Aorta (tissue), 5 donors: ENCODE measurements at regions of chr3 and their contacts with region 1.

Region 1: GRCh38 chr3:193665370-193665989 is 72.5 kb downstream of the OPA1 start:
- DNase-seq: no peak
- ATAC-seq: no peak
- H3K4me3 ChIP-seq: no peak overlapping the region
- H3K27ac ChIP-seq: no peak overlapping the region
- H3K4me1 ChIP-seq: no peaks in the 10 kb centered on the region
- H3K27me3 ChIP-seq: no peaks in the 10 kb centered on the region

Region 2: GRCh38 chr3:193391902-193392301 is 273.6 kb before region 1 on chr3:
- intact Hi-C with region 1: no loop called
- DNase-seq: no peak
- ATAC-seq: no peak
- H3K4me3 ChIP-seq: no peak overlapping the region
- H3K27ac ChIP-seq: no peak overlapping the region
- H3K4me1 ChIP-seq: no peaks in the 10 kb centered on the region
- H3K27me3 ChIP-seq: no peaks in the 10 kb centered on the region

Region 3: DNA sequence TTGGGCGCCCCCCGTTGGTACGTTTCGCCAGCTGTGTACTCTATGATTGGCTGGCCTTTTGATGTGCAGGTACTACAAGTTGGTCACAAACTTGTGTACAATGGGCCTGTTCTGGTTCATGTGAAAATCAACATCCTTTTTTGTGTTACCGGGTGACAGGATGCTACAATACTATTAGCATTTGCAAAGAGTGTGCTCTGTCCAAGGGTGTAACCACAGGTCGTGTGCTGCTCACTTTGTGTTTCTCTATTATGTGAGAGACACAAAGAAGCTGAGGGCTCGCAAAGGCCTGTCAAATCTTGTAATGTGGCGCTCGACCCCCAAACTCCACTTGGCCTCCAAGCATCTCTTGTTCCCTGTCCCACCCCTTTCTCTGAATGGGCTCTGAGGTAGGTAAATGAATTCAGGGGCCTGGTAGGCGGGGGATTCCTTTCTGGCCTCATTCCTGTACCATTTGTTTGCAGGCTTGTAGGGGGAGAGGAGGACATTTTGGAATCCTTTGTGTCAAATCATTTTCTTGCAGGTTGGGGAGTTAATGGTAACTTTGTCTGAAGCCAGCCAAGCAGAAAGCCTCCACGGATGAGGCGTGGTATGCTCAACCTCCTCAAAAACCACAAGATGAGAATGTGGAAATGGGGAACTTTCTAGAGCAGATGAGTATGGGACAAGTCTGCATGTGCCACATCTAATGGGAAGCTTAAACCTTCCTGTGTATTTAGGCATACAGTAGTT is 36.6 kb after region 1 on chr3:
- intact Hi-C with region 1: loop called in 1 of 2 experiments (anchors 5 kb)
- DNase-seq: no peak
- ATAC-seq: no peak
- H3K4me3 ChIP-seq: no peak overlapping the region
- H3K27ac ChIP-seq: peak overlapping the region in 1 of 2 donors; percentile 40
- H3K4me1 ChIP-seq: peaks cover 0 to 1% of the 10 kb centered on the region in 2 donors
- H3K27me3 ChIP-seq: no peaks in the 10 kb centered on the region

Region 4: DNA sequence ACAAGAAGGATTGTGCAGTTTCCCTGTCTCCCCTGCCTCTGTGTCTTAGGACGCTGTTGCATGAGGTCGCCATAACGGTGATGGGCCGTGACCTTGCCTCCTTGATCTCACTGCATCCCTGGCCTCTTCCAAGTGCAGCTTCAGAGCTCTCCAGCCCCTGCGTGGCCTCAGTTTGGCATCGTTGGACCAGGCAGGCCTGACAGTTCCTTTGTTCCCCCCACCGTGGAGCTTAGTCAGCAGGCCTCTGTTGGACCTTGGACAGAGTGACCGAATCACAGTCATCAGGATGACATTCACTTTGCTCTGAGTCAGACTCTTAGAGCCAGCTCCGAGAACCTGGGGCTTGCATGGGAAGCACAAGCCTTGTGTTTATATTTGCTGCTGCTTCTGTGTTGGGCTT is 66.9 kb after region 1 on chr3:
- intact Hi-C with region 1: no loop called
- DNase-seq: no peak
- ATAC-seq: no peak
- H3K4me3 ChIP-seq: no peak overlapping the region
- H3K27ac ChIP-seq: no peak overlapping the region
- H3K4me1 ChIP-seq: no peaks in the 10 kb centered on the region
- H3K27me3 ChIP-seq: no peaks in the 10 kb centered on the region

Region 5: GRCh38 chr3:193768070-193768394 is 102.6 kb after region 1 on chr3:
- intact Hi-C with region 1: no loop called
- DNase-seq: no peak
- ATAC-seq: peak; percentile 33
- H3K4me3 ChIP-seq: no peak overlapping the region
- H3K27ac ChIP-seq: no peak overlapping the region
- H3K4me1 ChIP-seq: no peaks in the 10 kb centered on the region
- H3K27me3 ChIP-seq: no peaks in the 10 kb centered on the region

Region 6: DNA sequence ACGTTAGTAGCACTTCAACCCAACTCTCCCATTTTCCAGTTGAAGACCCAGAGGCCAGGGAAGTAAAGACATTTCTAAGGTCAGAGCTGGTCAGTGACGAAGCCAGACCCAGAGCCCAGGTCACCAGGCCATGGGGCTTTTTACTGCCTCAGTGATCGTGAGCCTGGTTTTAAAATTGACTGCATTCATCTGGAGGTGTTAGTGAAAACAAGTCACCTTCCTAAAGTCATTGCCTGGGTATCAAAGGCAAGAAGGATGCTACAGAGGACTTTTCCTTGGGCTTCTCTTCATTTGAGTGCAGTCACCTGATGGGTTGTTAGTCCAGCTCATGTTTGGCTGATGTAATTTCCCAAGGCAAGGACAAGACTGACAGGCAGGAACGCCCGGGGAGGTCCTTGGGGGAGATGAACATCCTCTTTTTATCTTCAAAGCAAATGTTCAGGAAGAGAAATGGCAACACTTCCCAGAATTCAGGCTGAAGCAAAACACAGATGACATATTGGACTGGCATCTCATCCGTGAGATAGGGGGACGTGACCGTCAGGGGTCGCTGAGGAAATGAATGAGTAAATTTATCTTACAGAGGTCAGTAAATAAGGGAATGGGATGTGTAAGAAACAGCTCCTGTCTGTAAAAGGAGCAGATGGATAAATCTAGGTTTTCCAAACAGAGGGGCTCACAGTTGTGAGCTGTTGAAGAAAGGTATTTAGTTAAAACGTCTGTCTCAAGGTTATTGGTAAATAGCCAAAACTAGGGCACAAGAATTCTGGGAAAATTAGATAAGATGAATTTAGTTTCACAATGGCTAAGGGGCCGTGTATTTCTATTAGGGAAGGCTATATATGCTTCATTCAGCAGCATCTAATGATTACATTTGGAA is 128.8 kb after region 1 on chr3:
- intact Hi-C with region 1: no loop called
- DNase-seq: no peak
- ATAC-seq: no peak
- H3K4me3 ChIP-seq: no peak overlapping the region
- H3K27ac ChIP-seq: no peak overlapping the region
- H3K4me1 ChIP-seq: no peaks in the 10 kb centered on the region
- H3K27me3 ChIP-seq: no peaks in the 10 kb centered on the region